CD8-positive, alpha-beta T cell (primary cell): ENCODE measurements at regions of chr4 and their contacts with region 1.

Region 1: DNA sequence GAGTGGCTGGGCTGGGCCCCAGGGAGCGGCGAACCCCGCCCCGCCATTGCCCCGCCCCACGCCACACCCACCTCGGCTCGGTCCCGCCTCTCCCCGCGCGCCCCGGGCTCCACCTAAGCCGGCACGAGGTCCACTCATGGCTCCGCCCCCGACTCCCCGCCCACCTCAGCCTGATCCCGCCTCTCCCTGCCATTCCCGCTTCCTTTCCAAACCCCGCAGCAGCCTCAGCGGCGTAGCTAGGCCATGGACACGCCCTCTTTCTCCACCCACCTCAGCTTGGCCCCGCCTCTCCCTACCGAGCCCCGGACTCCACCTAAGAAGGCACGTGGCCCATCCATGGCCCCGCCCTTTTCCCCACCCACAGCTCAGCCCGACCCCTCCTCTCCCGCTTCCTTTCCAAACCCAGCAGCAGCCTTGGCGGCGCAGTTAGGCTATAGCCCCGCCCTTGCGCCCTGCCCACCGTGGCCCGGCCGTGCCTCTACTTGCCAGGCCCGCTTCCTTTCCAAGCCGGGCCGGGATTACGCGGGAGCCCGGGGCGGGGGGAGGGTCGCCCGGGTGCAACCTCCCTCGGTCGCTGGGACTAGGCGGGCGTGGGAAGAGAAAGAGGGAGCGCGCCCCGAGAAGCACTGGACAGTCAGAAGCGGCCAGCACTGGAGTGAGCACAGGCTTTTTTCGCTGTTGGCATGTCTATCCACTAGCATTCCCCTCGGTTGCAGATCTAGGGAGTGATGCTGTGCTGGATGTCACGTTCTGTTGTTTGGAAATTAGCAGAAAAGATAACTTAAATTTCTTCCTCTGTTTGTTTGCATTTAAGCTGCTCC is at the start of gene RELL1:
- DNase-seq: peak; percentile 95 to 99 (median 98)
- ATAC-seq: peak; percentile 83
- H3K4me3 ChIP-seq: peak within 1 kb of the TSS; percentile 61 to 82
- H3K4me3 Mint-ChIP-seq: peak within 1 kb of the TSS; percentile 92
- H3K27ac ChIP-seq: peak within 1 kb of the TSS; percentile 84 to 92
- H3K27ac Mint-ChIP-seq: peak within 1 kb of the TSS; percentile 97
- H3K4me1 ChIP-seq: peaks cover 30% of the 10 kb centered on the region
- H3K4me1 Mint-ChIP-seq: peaks cover 41% of the 10 kb centered on the region
- H3K27me3 ChIP-seq: no peaks in the 10 kb centered on the region
- H3K27me3 Mint-ChIP-seq: no peaks in the 10 kb centered on the region
- CTCF ChIP-seq: no peak
- total RNA-seq, gene RELL1: 60.7 to 61.7 TPM

Region 2: DNA sequence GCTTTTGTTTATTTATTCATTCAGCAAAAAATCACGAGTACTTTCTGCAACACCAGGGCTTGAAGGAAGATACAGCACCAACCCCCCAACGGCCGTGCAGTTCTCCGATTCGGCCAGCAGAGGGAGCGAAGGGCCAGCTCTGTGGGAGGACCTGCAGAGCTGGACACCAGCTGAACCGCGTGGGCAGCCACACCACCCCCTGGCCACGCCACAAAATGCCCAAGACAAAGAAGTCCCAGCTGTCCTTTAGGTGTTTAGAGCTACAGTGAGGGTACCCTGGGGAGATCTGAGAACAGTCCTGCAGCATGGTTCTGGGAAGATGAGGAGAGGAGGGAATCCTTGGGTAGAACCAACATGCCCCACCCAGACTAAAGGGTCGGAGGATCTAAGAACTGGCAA is 83.5 kb before region 1 on chr4:
- CTCF ChIA-PET with region 1: interaction called, 18 read pairs
- POLR2A ChIA-PET with region 1: no interaction called
- intact Hi-C with region 1: loop called (anchors 2 kb)
- DNase-seq: peak; percentile 56 to 87 (median 72)
- ATAC-seq: peak; percentile 74
- H3K4me3 ChIP-seq: no peak overlapping the region
- H3K4me3 Mint-ChIP-seq: no peak overlapping the region
- H3K27ac ChIP-seq: no peak overlapping the region
- H3K27ac Mint-ChIP-seq: no peak overlapping the region
- H3K4me1 ChIP-seq: peaks cover 8% of the 10 kb centered on the region
- H3K4me1 Mint-ChIP-seq: peaks cover 5% of the 10 kb centered on the region
- H3K27me3 ChIP-seq: no peaks in the 10 kb centered on the region
- H3K27me3 Mint-ChIP-seq: no peaks in the 10 kb centered on the region
- CTCF ChIP-seq: peak; percentile 98

Region 3: GRCh38 chr4:37726666-37727065 is 40.1 kb after region 1 on chr4:
- CTCF ChIA-PET with region 1: no interaction called
- POLR2A ChIA-PET with region 1: no interaction called
- intact Hi-C with region 1: no loop called
- DNase-seq: no peak
- ATAC-seq: no peak
- H3K4me3 ChIP-seq: no peak overlapping the region
- H3K4me3 Mint-ChIP-seq: no peak overlapping the region
- H3K27ac ChIP-seq: no peak overlapping the region
- H3K27ac Mint-ChIP-seq: no peak overlapping the region
- H3K4me1 ChIP-seq: peaks cover 6% of the 10 kb centered on the region
- H3K4me1 Mint-ChIP-seq: peaks cover 20% of the 10 kb centered on the region
- H3K27me3 ChIP-seq: no peaks in the 10 kb centered on the region
- H3K27me3 Mint-ChIP-seq: no peaks in the 10 kb centered on the region
- CTCF ChIP-seq: no peak

Region 4: GRCh38 chr4:37780444-37781150 is 94.0 kb after region 1 on chr4:
- CTCF ChIA-PET with region 1: no interaction called
- POLR2A ChIA-PET with region 1: interaction called, 3 read pairs
- intact Hi-C with region 1: loop called (anchors 1 to 5 kb)
- DNase-seq: peak; percentile 36 to 85 (median 61)
- ATAC-seq: peak; percentile 96
- H3K4me3 ChIP-seq: no peak overlapping the region
- H3K4me3 Mint-ChIP-seq: peak overlapping the region; percentile 13
- H3K27ac ChIP-seq: peak overlapping the region; percentile 18 to 47
- H3K27ac Mint-ChIP-seq: peak overlapping the region; percentile 91
- H3K4me1 ChIP-seq: peaks cover 25% of the 10 kb centered on the region
- H3K4me1 Mint-ChIP-seq: peaks cover 28% of the 10 kb centered on the region
- H3K27me3 ChIP-seq: no peaks in the 10 kb centered on the region
- H3K27me3 Mint-ChIP-seq: no peaks in the 10 kb centered on the region
- CTCF ChIP-seq: no peak

Region 5: GRCh38 chr4:37977471-37978247 is 291.1 kb after region 1 on chr4:
- CTCF ChIA-PET with region 1: no interaction called
- POLR2A ChIA-PET with region 1: no interaction called
- intact Hi-C with region 1: loop called (anchors 1 kb)
- DNase-seq: peak; percentile 48 to 90 (median 76)
- ATAC-seq: peak; percentile 73
- H3K4me3 ChIP-seq: peak overlapping the region; percentile 40 to 48
- H3K4me3 Mint-ChIP-seq: peak overlapping the region; percentile 87
- H3K27ac ChIP-seq: peak overlapping the region; percentile 57 to 66
- H3K27ac Mint-ChIP-seq: peak overlapping the region; percentile 74
- H3K4me1 ChIP-seq: peaks cover 18% of the 10 kb centered on the region
- H3K4me1 Mint-ChIP-seq: peaks cover 28% of the 10 kb centered on the region
- H3K27me3 ChIP-seq: no peaks in the 10 kb centered on the region
- H3K27me3 Mint-ChIP-seq: no peaks in the 10 kb centered on the region
- CTCF ChIP-seq: peak; percentile 65

Region 6: GRCh38 chr4:38856524-38857337 is 1170.1 kb after region 1 on chr4 and contains the start of gene TLR6:
- CTCF ChIA-PET with region 1: no interaction called
- POLR2A ChIA-PET with region 1: no interaction called
- intact Hi-C with region 1: loop called in 1 of 2 experiments (anchors 10 kb)
- DNase-seq: peak; percentile 35 to 86 (median 64)
- ATAC-seq: peak; percentile 85
- H3K4me3 ChIP-seq: peak within 1 kb of the TSS; percentile 31 to 57
- H3K4me3 Mint-ChIP-seq: peak within 1 kb of the TSS; percentile 74
- H3K27ac ChIP-seq: peak within 1 kb of the TSS; percentile 32 to 50
- H3K27ac Mint-ChIP-seq: peak within 1 kb of the TSS; percentile 62
- H3K4me1 ChIP-seq: peaks cover 17% of the 10 kb centered on the region
- H3K4me1 Mint-ChIP-seq: peaks cover 38% of the 10 kb centered on the region
- H3K27me3 ChIP-seq: no peaks in the 10 kb centered on the region
- H3K27me3 Mint-ChIP-seq: no peaks in the 10 kb centered on the region
- CTCF ChIP-seq: peak; percentile 93
- total RNA-seq, gene TLR6: 0.31 to 0.60 TPM

Region 7: GRCh38 chr4:39527273-39528060 is 1840.9 kb after region 1 on chr4 and contains the start of gene UGDH:
- CTCF ChIA-PET with region 1: no interaction called
- POLR2A ChIA-PET with region 1: no interaction called
- intact Hi-C with region 1: loop called in 1 of 2 experiments (anchors 5 kb)
- DNase-seq: peak; percentile 81 to 96 (median 90)
- ATAC-seq: peak; percentile 98
- H3K4me3 ChIP-seq: peak within 1 kb of the TSS; percentile 87 to 89
- H3K4me3 Mint-ChIP-seq: peak within 1 kb of the TSS; percentile 96
- H3K27ac ChIP-seq: peak within 1 kb of the TSS; percentile 68 to 74
- H3K27ac Mint-ChIP-seq: peak within 1 kb of the TSS; percentile 93
- H3K4me1 ChIP-seq: peaks cover 17% of the 10 kb centered on the region
- H3K4me1 Mint-ChIP-seq: peaks cover 24% of the 10 kb centered on the region
- H3K27me3 ChIP-seq: no peaks in the 10 kb centered on the region
- H3K27me3 Mint-ChIP-seq: no peaks in the 10 kb centered on the region
- CTCF ChIP-seq: no peak
- total RNA-seq, gene UGDH: 2.6 to 3.6 TPM